ENCODE measurements at regions of chr3 and their contacts with region 1.

Region 1: GRCh38 chr3:59575113-59576001 is 525.5 kb upstream of the CFAP20DC start:
- DNase-seq: peak; percentile 80 to 95 (median 91)
- ATAC-seq: peak; percentile 66 to 74
- H3K4me3 ChIP-seq: no peak overlapping the region
- H3K27ac ChIP-seq: no peak overlapping the region
- H3K4me1 ChIP-seq: no peaks in the 10 kb centered on the region
- H3K27me3 ChIP-seq: no peaks in the 10 kb centered on the region

Region 2: GRCh38 chr3:59212128-59212779 is 363.1 kb before region 1 on chr3:
- intact Hi-C with region 1: loop called in 1 of 4 experiments (anchors 10 kb)
- DNase-seq: no peak
- ATAC-seq: peak; percentile 57 to 80
- H3K4me3 ChIP-seq: no peak overlapping the region
- H3K27ac ChIP-seq: no peak overlapping the region
- H3K4me1 ChIP-seq: no peaks in the 10 kb centered on the region
- H3K27me3 ChIP-seq: no peaks in the 10 kb centered on the region

Region 3: GRCh38 chr3:59436164-59436958 is 139.0 kb before region 1 on chr3:
- intact Hi-C with region 1: no loop called
- DNase-seq: no peak
- ATAC-seq: no peak
- H3K4me3 ChIP-seq: no peak overlapping the region
- H3K27ac ChIP-seq: no peak overlapping the region
- H3K4me1 ChIP-seq: no peaks in the 10 kb centered on the region
- H3K27me3 ChIP-seq: no peaks in the 10 kb centered on the region